Activated CD4-positive, alpha-beta T cell treated with anti-CD3 and anti-CD28 coated beads for 36 hours (primary cell): ENCODE measurements at regions of chr9 and their contacts with region 1.

Region 1: DNA sequence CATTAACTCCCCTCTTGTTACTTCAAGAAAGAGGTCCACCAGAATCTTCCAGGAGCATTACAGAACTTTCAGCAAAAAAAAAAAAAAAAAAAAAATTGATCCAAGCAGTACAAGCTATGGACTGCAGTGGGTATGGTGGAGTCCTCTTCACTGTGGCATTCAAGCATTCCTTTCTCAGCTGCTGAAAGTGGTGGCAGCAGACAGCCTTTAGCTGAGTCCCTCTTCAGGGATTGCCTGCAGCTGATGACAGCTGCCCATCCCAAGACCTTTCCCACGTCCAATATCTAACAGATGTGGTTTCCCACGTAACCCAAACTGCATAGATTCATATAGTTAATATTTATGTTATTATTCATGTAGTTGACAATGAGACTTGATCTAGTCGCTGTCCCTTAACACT is 475.9 kb downstream of the TLE1 start:
- DNase-seq: no peak
- ATAC-seq: no peak
- H3K4me3 Mint-ChIP-seq: no peak overlapping the region
- H3K27ac Mint-ChIP-seq: no peak overlapping the region
- H3K4me1 Mint-ChIP-seq: no peaks in the 10 kb centered on the region
- H3K27me3 Mint-ChIP-seq: no peaks in the 10 kb centered on the region

Region 2: DNA sequence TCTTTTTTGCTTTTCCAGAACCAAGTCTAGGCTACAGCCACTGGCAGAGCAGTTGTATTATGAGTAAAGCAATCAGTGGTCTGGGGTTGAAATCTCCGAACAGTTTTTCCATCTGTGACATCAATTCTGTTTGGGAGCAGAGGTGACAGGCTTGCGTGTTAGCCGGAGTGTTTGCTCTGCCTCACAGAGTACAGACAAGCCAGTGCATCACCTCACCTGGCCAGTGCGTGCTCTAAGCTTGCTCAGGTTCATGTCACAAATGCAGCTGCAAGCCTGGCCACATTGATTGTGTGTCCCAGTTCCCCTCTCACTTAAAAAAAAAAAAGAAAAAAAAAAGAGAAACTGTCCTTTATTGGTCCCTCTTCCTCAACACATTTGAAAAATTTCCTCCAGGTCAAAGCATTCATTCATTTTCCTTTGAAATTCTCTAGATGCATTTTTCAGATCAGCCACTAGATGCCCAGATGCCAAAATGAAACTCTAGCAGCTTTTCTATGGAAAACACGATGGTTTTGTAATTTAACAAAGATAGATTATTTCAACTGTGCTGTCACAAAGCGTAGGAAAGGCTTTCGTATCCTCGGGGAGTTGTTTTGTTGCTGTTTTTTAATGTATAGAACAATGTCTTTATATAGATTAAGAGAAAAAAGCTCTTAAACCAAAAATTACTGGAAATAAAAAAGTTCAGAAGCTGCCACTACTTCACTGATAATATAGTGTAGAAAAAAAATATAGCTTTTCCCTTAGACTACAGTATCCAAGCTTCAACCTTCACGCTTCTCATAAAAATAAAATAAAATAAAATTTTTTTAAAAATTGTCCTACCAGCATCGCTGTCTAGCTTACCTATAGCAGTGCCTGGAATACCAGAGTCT is 109.6 kb before region 1 on chr9:
- CTCF ChIA-PET with region 1: no interaction called
- POLR2A ChIA-PET with region 1: no interaction called
- intact Hi-C with region 1: no loop called
- DNase-seq: no peak
- ATAC-seq: no peak
- H3K4me3 Mint-ChIP-seq: no peak overlapping the region
- H3K27ac Mint-ChIP-seq: no peak overlapping the region
- H3K4me1 Mint-ChIP-seq: no peaks in the 10 kb centered on the region
- H3K27me3 Mint-ChIP-seq: peaks cover 7% of the 10 kb centered on the region

Region 3: GRCh38 chr9:82504620-82505019 is 1291.2 kb after region 1 on chr9:
- CTCF ChIA-PET with region 1: no interaction called
- POLR2A ChIA-PET with region 1: no interaction called
- intact Hi-C with region 1: loop called in 1 of 2 experiments (anchors 10 kb)
- DNase-seq: no peak
- ATAC-seq: no peak
- H3K4me3 Mint-ChIP-seq: no peak overlapping the region
- H3K27ac Mint-ChIP-seq: no peak overlapping the region
- H3K4me1 Mint-ChIP-seq: no peaks in the 10 kb centered on the region
- H3K27me3 Mint-ChIP-seq: no peaks in the 10 kb centered on the region